ENCODE measurements at regions of chr3 and their contacts with region 1.

Region 1: DNA sequence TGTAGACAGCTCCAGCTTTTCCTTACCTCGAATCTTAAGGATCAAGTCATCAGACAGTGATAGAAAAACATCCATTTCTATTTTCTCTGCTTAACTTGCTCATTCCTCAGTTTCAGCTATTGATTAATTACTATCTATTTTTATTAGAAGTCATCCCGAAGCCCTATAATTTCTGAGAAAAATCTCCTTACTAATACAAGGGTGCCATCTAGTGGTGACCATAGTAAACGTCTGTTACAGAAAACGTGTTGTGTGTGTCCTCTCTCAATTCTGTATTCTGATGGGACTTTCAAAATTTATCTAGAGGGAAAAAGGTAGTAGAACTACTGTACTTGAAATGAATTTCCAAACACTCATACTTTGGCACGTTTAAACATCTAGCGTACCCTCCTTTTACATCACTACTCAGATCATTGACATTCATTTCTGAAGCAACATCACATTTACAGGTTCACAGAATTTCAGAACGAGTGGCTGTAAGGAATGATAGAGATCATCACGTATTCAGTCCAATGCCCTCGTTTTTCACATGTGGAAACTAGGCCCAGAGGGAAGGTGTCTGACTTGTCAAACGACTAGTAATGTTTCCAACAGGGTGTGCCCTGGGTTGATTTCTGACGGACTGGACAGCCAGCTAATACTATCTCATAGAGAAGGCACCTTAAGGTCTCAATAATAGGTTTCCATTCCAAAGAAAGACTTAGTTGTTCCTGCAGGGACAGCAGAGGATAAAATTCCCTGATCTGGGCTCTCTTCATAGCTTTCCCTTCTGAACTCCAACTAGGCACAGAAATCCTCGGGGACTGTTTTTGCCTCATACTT is 25.6 kb downstream of the HACD2 start:
- DNase-seq: peak; percentile 64
- ATAC-seq: peak; percentile 81
- H3K4me3 ChIP-seq: no peak overlapping the region
- H3K27ac ChIP-seq: no peak overlapping the region
- H3K4me1 ChIP-seq: peaks cover 3% of the 10 kb centered on the region
- H3K27me3 ChIP-seq: no peaks in the 10 kb centered on the region
- CTCF ChIP-seq: peak; percentile 75
- POLR2A ChIP-seq: no peak
- RAD21 ChIP-seq: peak; percentile 79

Region 2: DNA sequence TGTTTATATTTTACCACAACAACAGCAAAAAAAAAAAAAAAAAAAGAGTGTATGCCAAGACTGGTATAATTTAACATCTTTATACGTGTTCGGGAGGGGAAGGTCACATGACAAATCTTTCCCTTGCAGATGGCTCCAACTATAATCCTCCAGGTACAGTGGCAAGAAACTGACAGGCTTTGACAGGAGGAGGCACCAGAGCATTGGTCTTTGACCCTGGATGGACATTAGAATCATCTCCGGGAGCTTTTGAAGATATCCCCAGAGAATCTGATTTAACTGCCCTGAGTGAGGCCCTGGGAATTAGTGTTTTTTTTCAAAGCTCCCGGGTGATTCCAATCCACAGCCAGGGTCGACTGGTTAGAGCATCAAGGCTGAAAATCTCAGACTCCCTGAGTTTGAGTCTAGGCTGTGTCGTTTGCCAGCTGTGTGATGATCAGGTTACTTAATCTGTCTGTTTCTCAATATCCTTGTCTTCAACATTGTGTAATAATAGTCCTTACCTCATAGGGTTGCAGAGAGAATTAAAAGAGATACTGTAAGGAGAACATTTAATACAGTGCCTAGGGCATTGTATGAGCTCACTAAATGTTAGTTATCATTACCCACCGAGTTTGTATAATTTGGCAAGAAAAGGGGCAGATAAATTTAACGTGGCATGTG is 522.8 kb before region 1 on chr3:
- CTCF ChIA-PET with region 1: no interaction called
- POLR2A ChIA-PET with region 1: no interaction called
- dilution Hi-C with region 1: no loop called
- in situ Hi-C with region 1: no loop called
- intact Hi-C with region 1: no loop called
- DNase-seq: peak; percentile 66
- ATAC-seq: peak; percentile 80
- H3K4me3 ChIP-seq: no peak overlapping the region
- H3K27ac ChIP-seq: no peak overlapping the region
- H3K4me1 ChIP-seq: no peaks in the 10 kb centered on the region; the same call in 1 of the 2 replicates
- H3K27me3 ChIP-seq: peaks cover 76% of the 10 kb centered on the region
- CTCF ChIP-seq: no peak
- POLR2A ChIP-seq: no peak
- RAD21 ChIP-seq: no peak

Region 3: GRCh38 chr3:123328851-123329635 is 230.2 kb before region 1 on chr3:
- CTCF ChIA-PET with region 1: interaction called, 3 read pairs
- POLR2A ChIA-PET with region 1: no interaction called
- dilution Hi-C with region 1: no loop called
- in situ Hi-C with region 1: loop called (anchors 5 kb)
- intact Hi-C with region 1: loop called (anchors 1 kb)
- DNase-seq: peak; percentile 34
- ATAC-seq: peak; percentile 98
- H3K4me3 ChIP-seq: no peak overlapping the region
- H3K27ac ChIP-seq: no peak overlapping the region
- H3K4me1 ChIP-seq: no peaks in the 10 kb centered on the region
- H3K27me3 ChIP-seq: peaks cover 46% of the 10 kb centered on the region
- CTCF ChIP-seq: peak; percentile 87
- POLR2A ChIP-seq: no peak
- RAD21 ChIP-seq: peak; percentile 84

Region 4: DNA sequence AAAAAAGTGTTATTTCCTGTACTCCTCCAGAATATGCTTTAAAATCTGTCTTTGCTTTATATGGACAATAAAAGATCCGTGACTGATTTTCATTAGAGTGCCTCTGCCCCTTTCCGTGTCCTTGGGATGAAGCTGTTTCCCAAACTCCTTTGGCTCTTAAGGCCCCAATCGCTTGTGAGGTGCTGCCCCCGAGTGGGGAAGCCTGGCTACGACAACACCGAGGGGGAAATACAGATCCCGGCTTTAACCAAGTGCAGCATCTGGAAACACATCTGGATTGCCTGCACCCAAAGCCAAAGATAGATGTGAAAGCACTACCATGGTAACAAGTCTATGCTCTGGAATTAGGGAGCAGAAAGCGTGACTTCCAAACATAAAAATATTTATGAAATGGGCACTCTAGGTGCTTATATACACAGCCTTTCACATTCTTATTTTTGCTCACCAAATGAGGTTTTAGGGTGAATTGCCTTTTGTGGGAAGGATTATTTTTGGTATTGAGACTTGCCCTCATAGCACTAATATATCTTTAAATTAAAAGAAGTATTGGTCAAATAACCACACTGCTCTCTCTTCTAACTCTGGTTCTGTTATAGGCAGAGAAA is 69.7 kb before region 1 on chr3:
- CTCF ChIA-PET with region 1: interaction called, 3 read pairs
- POLR2A ChIA-PET with region 1: no interaction called
- dilution Hi-C with region 1: no loop called
- in situ Hi-C with region 1: no loop called
- intact Hi-C with region 1: loop called (anchors 2 kb)
- DNase-seq: peak; percentile 56
- ATAC-seq: peak; percentile 98
- H3K4me3 ChIP-seq: no peak overlapping the region
- H3K27ac ChIP-seq: no peak overlapping the region
- H3K4me1 ChIP-seq: no peaks in the 10 kb centered on the region
- H3K27me3 ChIP-seq: peaks cover 5% of the 10 kb centered on the region
- CTCF ChIP-seq: peak; percentile 88
- POLR2A ChIP-seq: peak; percentile 56; the same call in 1 of the 2 replicates
- RAD21 ChIP-seq: peak; percentile 94

Region 5: DNA sequence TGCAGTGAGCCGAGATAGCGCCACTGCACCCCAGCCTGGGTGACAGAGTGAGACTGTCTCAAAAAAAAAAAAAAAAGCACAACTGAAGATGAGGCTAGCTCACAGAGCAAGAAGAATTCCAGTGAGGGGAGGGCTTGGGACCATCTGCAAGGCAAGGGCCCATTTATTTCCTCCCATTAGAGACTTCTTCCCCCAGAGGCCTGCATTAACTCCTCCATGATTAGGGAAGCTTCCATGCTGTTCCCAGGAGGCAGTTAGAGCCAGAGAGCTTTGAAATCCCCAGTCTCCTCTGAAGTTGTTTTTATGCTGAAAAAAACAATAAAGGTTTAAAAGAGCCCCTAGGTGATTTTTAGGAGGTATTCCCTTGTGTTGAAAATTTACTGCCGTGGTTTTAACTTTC is 56.0 kb before region 1 on chr3:
- CTCF ChIA-PET with region 1: interaction called, 4 read pairs
- POLR2A ChIA-PET with region 1: no interaction called
- dilution Hi-C with region 1: no loop called
- in situ Hi-C with region 1: no loop called
- intact Hi-C with region 1: loop called (anchors 5 kb)
- DNase-seq: no peak
- ATAC-seq: no peak
- H3K4me3 ChIP-seq: no peak overlapping the region
- H3K27ac ChIP-seq: no peak overlapping the region
- H3K4me1 ChIP-seq: peaks cover 4% of the 10 kb centered on the region
- H3K27me3 ChIP-seq: no peaks in the 10 kb centered on the region
- CTCF ChIP-seq: no peak
- POLR2A ChIP-seq: no peak
- RAD21 ChIP-seq: no peak

Region 6: DNA sequence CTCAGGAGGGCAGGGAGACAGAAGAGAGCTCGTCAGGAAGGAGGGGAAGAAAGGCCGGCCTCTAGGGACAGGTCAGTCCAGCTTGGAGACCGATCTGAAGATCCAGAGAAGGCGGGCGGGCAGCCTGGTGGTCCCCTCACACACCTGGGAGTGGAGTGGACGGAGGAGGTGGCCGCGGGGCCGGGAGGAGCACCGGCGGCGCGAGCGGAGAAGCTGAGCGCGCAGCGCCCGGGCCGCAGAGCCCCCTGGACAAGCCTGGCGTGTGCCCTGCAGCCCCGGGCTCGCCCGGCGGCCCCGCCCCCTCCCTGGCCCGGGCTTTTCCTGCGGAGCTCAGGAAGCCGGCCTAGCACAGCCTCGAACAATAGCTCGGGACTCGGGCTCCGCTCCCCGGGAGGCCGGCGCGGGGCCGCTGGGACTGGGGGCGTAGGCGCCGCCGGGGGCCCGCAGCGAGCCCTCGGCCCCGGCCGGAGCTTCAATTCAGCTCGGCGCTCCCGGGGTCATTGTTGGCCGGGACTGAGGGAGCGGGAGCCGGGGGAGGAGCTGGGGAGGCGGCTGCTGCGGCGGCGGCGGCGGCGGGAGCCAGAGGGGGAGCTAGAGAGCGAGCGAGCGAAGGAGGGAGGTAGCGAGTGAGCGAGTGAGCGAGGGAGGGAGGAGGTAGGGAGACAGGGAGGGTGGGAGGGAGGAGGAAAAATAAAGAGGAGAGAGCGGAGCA is 473.6 kb after region 1 on chr3:
- CTCF ChIA-PET with region 1: no interaction called
- POLR2A ChIA-PET with region 1: no interaction called
- dilution Hi-C with region 1: no loop called
- in situ Hi-C with region 1: no loop called
- intact Hi-C with region 1: no loop called
- DNase-seq: peak; percentile 71
- ATAC-seq: peak; percentile 98
- H3K4me3 ChIP-seq: peak overlapping the region; percentile 55
- H3K27ac ChIP-seq: peak overlapping the region; percentile 28; the same call in 1 of the 2 replicates
- H3K4me1 ChIP-seq: peaks cover 1% of the 10 kb centered on the region; the same call in 1 of the 2 replicates
- H3K27me3 ChIP-seq: peaks cover 32% of the 10 kb centered on the region
- CTCF ChIP-seq: peak; percentile 60
- POLR2A ChIP-seq: no peak
- RAD21 ChIP-seq: no peak

Region 7: DNA sequence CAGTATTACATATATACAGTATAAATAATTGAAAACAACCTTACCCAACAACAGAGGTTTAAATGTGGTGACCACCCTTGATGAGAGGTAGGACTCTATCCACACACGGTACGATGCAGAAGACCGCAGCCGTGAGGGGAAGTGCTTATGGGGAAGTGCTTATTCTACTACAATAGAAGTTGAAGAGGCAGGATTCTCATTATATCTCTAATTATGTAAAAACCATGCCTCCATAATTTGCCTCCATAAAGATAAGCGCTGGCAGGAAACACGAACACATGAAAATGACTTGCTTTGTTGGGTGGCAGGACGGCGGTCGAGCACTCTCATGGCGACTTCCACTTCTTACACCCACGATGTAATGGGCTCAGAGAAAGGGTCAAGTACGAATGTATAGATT is 1382.5 kb after region 1 on chr3:
- CTCF ChIA-PET with region 1: no interaction called
- POLR2A ChIA-PET with region 1: no interaction called
- dilution Hi-C with region 1: no loop called
- in situ Hi-C with region 1: no loop called
- intact Hi-C with region 1: no loop called
- DNase-seq: no peak
- ATAC-seq: no peak
- H3K4me3 ChIP-seq: no peak overlapping the region
- H3K27ac ChIP-seq: no peak overlapping the region
- H3K4me1 ChIP-seq: no peaks in the 10 kb centered on the region
- H3K27me3 ChIP-seq: peaks cover 6% of the 10 kb centered on the region; the same call in 1 of the 2 replicates
- CTCF ChIP-seq: no peak
- POLR2A ChIP-seq: no peak
- RAD21 ChIP-seq: no peak

Measured in IMR-90 (cell line).